ENCODE measurements at regions of chr15 and their contacts with region 1.

Region 1: GRCh38 chr15:77543159-77543882 is 89.4 kb downstream of the LINGO1 start:
- DNase-seq: peak; percentile 57 to 87 (median 75)
- ATAC-seq: peak; percentile 94
- H3K4me3 ChIP-seq: peak overlapping the region; percentile 71 to 72
- H3K4me3 Mint-ChIP-seq: peak overlapping the region; percentile 76
- H3K27ac ChIP-seq: peak overlapping the region; percentile 10 to 24
- H3K27ac Mint-ChIP-seq: no peak overlapping the region
- H3K4me1 ChIP-seq: peaks cover 9% of the 10 kb centered on the region
- H3K4me1 Mint-ChIP-seq: peaks cover 14% of the 10 kb centered on the region
- H3K27me3 ChIP-seq: no peaks in the 10 kb centered on the region
- H3K27me3 Mint-ChIP-seq: no peaks in the 10 kb centered on the region
- CTCF ChIP-seq: peak; percentile 94

Region 2: DNA sequence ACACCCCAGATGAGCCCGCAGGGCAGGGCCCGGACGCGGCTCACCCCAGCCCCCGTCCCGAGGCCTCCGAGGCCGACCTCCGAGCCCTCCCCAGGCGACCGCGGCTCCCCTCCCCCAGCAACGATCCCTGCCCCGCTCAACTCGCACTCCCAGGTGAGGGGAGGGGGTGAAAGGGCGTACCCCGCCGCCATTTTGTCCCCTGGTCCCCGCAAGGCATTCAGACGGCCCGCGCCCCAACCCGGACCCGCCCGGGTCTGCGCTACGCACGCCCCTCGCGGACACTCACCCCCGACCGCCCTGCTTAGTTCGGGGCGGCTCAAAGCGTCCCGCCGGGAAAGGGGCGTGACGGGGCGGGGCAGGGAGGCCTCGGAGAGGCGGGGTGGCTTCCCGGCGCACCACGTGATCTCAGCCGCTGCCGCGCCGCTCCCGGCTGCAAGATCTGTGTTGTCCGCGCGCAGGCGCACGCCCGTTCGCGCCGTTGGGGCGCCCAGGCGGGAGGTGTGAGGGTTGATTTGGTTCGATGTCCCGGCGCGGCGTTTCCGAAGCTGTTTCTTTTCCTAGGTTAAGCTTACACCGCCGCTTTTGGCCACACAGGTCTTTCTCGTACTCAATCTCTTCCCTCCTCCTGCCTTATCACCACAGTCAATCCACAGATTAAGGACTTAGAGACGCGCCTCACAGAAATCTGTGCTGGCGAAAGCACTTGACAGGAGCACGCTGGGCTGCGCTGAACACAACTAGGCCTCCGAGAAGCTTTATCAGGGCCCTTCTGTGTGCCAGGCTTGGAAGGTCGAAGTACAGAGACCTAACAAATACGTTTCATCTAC is 638.1 kb before region 1 on chr15 and contains the start of gene SCAPER:
- CTCF ChIA-PET with region 1: no interaction called
- POLR2A ChIA-PET with region 1: no interaction called
- intact Hi-C with region 1: loop called in 1 of 2 experiments (anchors 2 kb)
- DNase-seq: peak; percentile 72 to 95 (median 92)
- ATAC-seq: peak; percentile 86
- H3K4me3 ChIP-seq: peak within 1 kb of the TSS; percentile 82 to 88
- H3K4me3 Mint-ChIP-seq: peak within 1 kb of the TSS; percentile 91
- H3K27ac ChIP-seq: peak within 1 kb of the TSS; percentile 47 to 81
- H3K27ac Mint-ChIP-seq: peak within 1 kb of the TSS; percentile 96
- H3K4me1 ChIP-seq: peaks cover 24% of the 10 kb centered on the region
- H3K4me1 Mint-ChIP-seq: peaks cover 36% of the 10 kb centered on the region
- H3K27me3 ChIP-seq: no peaks in the 10 kb centered on the region
- H3K27me3 Mint-ChIP-seq: no peaks in the 10 kb centered on the region
- CTCF ChIP-seq: no peak
- total RNA-seq, gene SCAPER: 21.7 to 29.7 TPM

Region 3: DNA sequence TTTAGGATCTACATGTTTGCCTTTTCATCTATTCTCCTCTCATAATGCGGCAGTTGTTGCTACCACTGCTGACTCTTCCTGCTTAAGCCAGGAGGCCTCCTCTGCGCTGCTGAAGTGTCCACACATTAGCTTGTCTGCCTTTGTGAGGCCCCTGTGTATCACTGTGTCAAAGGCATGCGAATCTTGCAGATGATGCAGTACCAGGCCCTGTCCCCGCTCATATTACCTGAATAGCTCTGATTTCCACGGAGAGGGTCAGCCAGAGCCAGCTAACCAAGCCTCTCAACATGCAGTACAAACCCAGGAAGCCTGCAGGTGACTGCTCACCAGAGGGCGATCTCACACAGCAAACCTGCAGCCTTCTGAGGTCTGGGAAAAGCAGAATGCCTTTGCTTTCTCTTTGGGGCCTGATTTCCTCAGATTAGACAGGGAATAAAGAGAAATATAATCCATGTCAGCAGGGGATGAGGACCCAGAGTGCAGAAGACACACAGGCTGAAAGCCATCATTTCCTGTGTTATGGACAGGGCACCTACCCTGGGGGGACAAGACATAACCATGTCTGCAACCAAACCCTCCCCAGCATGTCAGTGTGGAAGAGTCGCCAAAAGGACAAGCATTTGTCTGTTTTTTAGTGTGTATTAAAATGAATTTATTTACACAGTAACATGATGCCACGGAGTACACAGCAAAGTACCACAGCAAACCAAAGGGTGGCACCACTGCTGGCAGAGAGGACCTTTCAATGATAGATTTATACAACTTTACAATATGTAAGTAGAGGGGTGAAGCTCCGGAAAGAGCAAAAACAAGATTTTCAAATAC is 435.6 kb before region 1 on chr15:
- CTCF ChIA-PET with region 1: interaction called, 25 read pairs
- POLR2A ChIA-PET with region 1: interaction called, 3 read pairs
- intact Hi-C with region 1: loop called in 1 of 2 experiments (anchors 1 kb)
- DNase-seq: peak in 7 of 9 experiments; percentile 8 to 49 (median 32)
- ATAC-seq: no peak
- H3K4me3 ChIP-seq: no peak overlapping the region
- H3K4me3 Mint-ChIP-seq: no peak overlapping the region
- H3K27ac ChIP-seq: no peak overlapping the region
- H3K27ac Mint-ChIP-seq: no peak overlapping the region
- H3K4me1 ChIP-seq: no peaks in the 10 kb centered on the region
- H3K4me1 Mint-ChIP-seq: no peaks in the 10 kb centered on the region
- H3K27me3 ChIP-seq: no peaks in the 10 kb centered on the region
- H3K27me3 Mint-ChIP-seq: no peaks in the 10 kb centered on the region
- CTCF ChIP-seq: no peak

Region 4: DNA sequence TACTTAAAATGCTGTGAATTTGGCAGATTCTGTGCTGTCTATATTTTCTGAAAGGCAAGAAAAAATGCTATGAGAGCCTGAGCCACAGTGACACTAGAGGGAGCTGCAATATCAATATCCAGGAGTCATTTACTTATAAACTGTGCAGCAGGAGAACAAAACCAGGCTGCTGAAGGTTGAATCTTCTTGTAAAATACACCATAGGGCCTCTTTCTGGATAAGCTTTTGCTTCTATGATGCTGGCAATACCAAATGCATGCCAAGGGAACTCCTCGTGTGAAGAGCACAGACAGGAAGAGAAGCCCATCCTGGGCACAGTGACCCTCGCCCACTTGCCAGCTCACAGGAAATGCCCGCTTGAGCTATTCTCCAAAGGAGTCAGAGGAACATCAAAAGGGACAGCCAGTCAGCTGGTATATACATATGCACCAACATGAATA is 424.4 kb before region 1 on chr15:
- CTCF ChIA-PET with region 1: interaction called, 70 read pairs
- POLR2A ChIA-PET with region 1: interaction called, 3 read pairs
- intact Hi-C with region 1: loop called (anchors 1 kb)
- DNase-seq: peak in 6 of 9 experiments; percentile 18 to 78 (median 32)
- ATAC-seq: peak; percentile 55
- H3K4me3 ChIP-seq: no peak overlapping the region
- H3K4me3 Mint-ChIP-seq: no peak overlapping the region
- H3K27ac ChIP-seq: no peak overlapping the region
- H3K27ac Mint-ChIP-seq: no peak overlapping the region
- H3K4me1 ChIP-seq: peaks cover 3% of the 10 kb centered on the region
- H3K4me1 Mint-ChIP-seq: peaks cover 7% of the 10 kb centered on the region
- H3K27me3 ChIP-seq: no peaks in the 10 kb centered on the region
- H3K27me3 Mint-ChIP-seq: no peaks in the 10 kb centered on the region
- CTCF ChIP-seq: peak; percentile 71

Region 5: DNA sequence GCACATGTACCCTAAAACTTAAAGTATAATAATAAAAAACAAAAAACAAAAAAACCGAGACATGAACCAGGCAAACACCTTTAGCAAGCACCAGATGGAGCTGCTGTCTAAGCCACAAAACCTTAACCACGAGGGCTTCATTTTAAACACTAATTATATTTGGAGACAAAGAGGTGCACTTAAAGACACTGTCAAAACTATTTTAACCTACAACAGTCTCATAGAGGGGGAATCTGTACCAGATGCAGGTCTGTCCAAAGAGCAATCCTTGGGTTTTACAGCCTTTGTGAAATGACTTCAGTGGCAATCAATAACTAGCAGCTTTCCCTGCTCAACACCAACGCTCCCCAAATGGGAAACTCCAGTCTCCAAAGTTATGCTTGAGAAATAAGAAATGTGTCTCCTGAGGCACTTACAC is 356.7 kb before region 1 on chr15:
- CTCF ChIA-PET with region 1: interaction called, 19 read pairs
- POLR2A ChIA-PET with region 1: no interaction called
- intact Hi-C with region 1: loop called (anchors 1 to 2 kb)
- DNase-seq: peak in 3 of 9 experiments; percentile 26 to 63 (median 46)
- ATAC-seq: no peak
- H3K4me3 ChIP-seq: no peak overlapping the region
- H3K4me3 Mint-ChIP-seq: no peak overlapping the region
- H3K27ac ChIP-seq: no peak overlapping the region
- H3K27ac Mint-ChIP-seq: no peak overlapping the region
- H3K4me1 ChIP-seq: peaks cover 18% of the 10 kb centered on the region
- H3K4me1 Mint-ChIP-seq: peaks cover 41% of the 10 kb centered on the region
- H3K27me3 ChIP-seq: no peaks in the 10 kb centered on the region
- H3K27me3 Mint-ChIP-seq: no peaks in the 10 kb centered on the region
- CTCF ChIP-seq: peak; percentile 60

Measured in CD8-positive, alpha-beta T cell (primary cell).